Dorsolateral prefrontal cortex (tissue), 120 donors: ENCODE measurements at regions of chr13 and their contacts with region 1.

Region 1: DNA sequence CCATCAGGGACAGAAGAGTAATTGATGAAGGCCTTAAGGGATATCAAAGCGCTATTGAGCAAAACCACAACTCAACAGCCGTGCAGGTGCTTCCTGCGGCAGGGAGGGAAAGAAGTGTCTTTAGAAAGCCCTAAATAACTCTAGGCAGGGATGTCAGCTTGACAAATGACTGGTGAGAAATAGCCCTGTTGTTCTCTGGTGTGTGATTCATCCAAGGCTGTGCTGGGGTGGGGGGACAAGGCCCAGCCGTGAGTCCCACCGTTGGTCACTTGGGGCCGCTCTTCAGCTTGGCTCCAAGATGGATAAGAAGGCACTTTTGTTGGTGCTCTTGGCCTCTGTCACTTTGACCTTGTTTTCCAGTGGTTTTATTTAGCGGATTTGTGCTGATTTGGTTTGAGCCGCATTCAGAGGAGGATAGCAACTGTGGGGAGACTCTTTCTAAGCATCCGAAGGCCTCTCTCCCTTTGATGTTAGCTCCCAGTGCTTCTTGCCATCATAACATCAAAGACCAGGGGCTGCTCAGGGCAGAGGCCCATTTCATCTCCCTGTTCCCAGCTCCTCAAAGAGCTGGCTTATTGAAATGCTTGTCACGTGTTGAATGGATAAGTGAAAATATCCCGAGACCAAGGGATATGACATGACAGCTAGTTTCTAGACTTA is 130.3 kb upstream of the SERP2 start:
- DNase-seq: peak in 9 of 10 donors; percentile 57 to 82 (median 74)
- H3K4me3 ChIP-seq: peak overlapping the region in 1 of 59 donors; percentile 3
- H3K27ac ChIP-seq: peak overlapping the region; percentile 45 to 94 (median 85)
- H3K27me3 ChIP-seq: no peaks in the 10 kb centered on the region
- CTCF ChIP-seq: peak in 53 of 56 donors; percentile 17 to 79 (median 55)

Region 2: GRCh38 chr13:43905435-43906031 is 337.8 kb before region 1 on chr13:
- intact Hi-C with region 1: loop called in 1 of 2 experiments (anchors 10 kb)
- DNase-seq: peak in 2 of 10 donors; percentile 35 to 51
- H3K4me3 ChIP-seq: no peak overlapping the region
- H3K27ac ChIP-seq: no peak overlapping the region
- H3K27me3 ChIP-seq: no peaks in the 10 kb centered on the region
- CTCF ChIP-seq: peak; percentile 81 to 98 (median 92)

Region 3: DNA sequence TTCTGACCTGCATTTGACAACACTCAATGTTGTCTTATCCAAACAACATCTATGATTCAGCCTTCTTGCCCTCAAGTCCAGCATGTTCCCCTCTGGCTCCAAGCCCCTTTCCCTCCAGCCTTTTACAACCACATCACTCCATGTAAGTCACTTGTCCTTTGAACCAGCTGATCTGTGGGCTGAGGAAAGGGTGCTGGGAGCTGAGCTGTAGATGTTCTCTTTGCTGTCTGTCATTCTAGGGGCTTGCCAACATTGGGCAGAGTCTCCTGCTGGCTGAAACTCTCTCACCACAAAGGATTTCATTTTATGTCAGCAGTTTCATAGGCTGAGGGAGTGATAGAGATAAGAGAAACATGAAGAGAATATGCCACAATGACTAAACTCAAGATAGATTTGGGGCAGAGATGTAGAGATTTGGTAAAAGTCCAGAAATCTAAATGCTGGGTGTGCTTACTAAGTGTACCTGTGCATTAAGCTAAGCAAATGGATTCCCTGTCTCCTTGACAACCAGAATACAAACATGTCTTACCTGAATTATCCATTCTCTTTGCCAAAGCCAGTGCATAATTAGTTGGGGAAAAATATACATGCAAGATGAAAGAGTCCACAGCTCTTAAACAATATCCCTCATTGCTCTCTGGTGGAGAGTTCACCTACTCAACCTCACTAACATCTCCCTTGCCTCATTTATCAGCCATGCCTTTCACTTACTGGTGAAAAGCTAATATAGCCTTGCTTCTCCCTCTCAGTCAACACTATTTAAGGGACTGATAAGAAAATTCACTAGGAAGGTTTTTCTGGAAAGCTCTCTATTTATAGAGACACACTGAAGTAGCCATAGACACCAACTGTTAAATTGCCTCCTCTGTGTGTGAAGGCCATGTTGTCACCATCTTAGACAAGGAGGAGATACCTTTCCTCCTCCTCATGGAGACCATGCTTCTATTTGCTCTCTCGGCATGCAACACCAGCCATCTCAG is 45.2 kb before region 1 on chr13:
- intact Hi-C with region 1: no loop called
- DNase-seq: no peak
- H3K4me3 ChIP-seq: no peak overlapping the region
- H3K27ac ChIP-seq: peak overlapping the region in 45 of 59 donors; percentile 5 to 77 (median 52)
- H3K27me3 ChIP-seq: no peaks in the 10 kb centered on the region
- CTCF ChIP-seq: no peak

Region 4: DNA sequence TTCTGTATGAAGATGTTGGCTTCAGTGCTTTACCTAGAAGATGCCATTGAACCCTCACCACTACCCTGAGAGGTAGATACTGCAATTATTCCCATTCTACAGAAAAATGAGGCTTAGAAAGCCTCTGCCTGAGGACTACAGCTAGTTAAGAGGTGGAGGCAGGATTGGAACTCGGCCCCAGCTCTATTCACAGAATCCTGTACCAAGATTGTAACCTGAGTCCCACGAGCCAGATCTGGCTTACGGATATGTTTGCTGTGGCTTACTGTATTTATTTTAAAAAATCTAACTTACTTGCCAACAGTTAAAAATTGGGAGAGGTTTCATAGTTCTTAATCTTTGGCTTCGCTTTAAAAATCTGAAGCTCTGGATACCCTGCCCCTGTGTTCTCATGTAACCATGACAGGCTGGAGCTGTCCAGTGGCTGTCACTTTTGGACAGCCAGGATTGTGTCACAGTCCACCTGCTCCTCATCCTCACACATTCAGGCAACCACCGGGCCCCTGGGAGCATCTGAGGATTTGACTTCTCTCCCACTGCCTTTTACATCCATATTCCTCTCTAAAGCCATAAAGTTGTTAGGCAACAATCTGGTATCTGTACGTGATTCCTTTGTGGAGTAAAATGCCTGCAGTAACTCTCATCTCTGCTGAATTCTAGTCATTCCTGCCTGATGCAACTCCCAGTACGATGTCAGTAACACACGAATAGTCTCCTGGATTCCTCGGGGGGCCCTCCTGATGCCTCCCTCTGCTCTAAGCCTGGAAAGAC is 30.5 kb before region 1 on chr13:
- intact Hi-C with region 1: loop called in 1 of 2 experiments (anchors 1 kb)
- DNase-seq: no peak
- H3K4me3 ChIP-seq: no peak overlapping the region
- H3K27ac ChIP-seq: peak overlapping the region; percentile 32 to 100 (median 98)
- H3K27me3 ChIP-seq: no peaks in the 10 kb centered on the region
- CTCF ChIP-seq: no peak

Region 5: DNA sequence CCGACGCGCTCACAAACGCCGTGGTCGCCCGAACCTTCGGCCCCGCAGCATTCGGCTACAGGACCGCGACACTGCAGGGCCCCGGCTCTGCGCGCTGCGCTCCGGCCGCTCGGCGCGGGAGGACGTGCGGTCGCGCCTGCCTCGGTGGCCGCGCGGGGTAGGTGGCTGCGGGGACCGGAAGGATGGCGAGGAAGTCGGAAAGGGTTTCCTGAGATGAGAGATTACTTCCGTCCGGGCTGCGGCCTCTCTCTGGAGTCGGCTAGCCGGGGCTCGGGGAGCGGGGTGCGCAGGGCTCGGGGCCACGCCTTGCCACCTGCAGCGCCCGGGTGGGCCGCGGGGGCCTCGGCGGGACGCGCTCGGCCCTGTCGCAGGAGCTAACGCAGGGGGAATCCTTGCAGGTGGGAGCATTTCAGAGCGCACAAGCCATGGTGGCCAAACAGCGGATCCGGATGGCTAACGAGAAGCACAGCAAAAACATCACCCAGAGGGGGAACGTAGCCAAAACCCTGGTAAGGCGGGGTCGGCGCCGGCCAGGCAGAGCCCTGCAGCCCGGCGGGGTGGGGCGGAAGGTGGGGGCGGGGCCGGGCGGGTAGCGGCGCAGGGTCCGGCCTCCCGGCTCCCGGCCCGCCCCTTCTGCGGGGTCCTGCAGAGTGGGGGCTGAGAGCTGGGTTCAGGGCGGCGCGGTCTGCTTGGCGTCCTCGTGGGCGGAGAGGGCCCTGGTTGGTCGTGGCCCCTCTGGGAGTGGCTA is 130.4 kb after region 1 on chr13 and contains the start of gene SERP2:
- intact Hi-C with region 1: loop called in 1 of 2 experiments (anchors 10 kb)
- DNase-seq: peak in 8 of 10 donors; percentile 28 to 75 (median 54)
- H3K4me3 ChIP-seq: peak within 1 kb of the TSS; percentile 54 to 94 (median 82)
- H3K27ac ChIP-seq: peak within 1 kb of the TSS; percentile 64 to 99 (median 94)
- H3K27me3 ChIP-seq: no peaks in the 10 kb centered on the region
- CTCF ChIP-seq: peak in 3 of 56 donors; percentile 1 to 15 (median 12)
- total RNA-seq, gene SERP2: 37.0 to 96.0 (median 70.9) TPM

Region 6: GRCh38 chr13:44498969-44499368 is 255.6 kb after region 1 on chr13:
- intact Hi-C with region 1: no loop called
- DNase-seq: no peak
- H3K4me3 ChIP-seq: no peak overlapping the region
- H3K27ac ChIP-seq: no peak overlapping the region
- H3K27me3 ChIP-seq: no peaks in the 10 kb centered on the region
- CTCF ChIP-seq: no peak

Region 7: DNA sequence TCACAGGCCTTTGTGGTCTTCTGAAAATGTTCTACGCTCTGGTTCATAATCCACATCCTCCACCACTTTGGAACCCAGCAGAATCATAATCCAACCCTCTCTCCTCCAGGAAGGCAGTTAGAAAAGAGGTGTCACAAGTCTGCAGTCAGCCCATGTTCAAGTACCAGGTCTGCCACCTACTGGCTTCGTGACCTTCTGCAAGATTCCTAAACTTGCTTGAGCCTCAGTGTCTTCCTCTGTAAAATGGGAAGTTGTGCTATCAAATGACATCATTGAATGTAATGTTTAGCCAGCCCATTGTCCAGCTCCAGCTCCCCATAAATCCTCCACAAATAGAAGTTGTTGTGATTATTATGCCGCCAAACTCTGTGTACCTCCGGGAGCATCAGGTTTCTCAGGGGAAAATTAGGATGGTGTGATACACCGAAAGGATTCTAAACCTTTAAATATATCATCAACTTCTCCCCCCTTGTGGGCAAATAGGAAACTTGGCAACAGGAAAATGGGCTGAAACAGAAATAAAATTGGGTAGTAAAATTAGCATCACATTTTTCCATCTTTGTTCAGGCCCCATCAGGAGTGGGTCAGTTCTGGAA is 636.2 kb after region 1 on chr13:
- intact Hi-C with region 1: no loop called
- DNase-seq: no peak
- H3K4me3 ChIP-seq: no peak overlapping the region
- H3K27ac ChIP-seq: no peak overlapping the region
- H3K27me3 ChIP-seq: no peaks in the 10 kb centered on the region
- CTCF ChIP-seq: peak in 41 of 56 donors; percentile 4 to 56 (median 33)